CD4-positive, alpha-beta T cell (primary cell): ENCODE measurements at regions of chr19 and their contacts with region 1.

Region 1: GRCh38 chr19:33373701-33374421 is at the start of gene CEBPG:
- DNase-seq: peak in 11 of 14 experiments; percentile 18 to 88 (median 58)
- ATAC-seq: peak; percentile 27
- H3K4me3 ChIP-seq: peak within 1 kb of the TSS; percentile 97
- H3K4me3 Mint-ChIP-seq: peak within 1 kb of the TSS; percentile 93
- H3K27ac ChIP-seq: peak within 1 kb of the TSS; percentile 86 to 91
- H3K27ac Mint-ChIP-seq: peak within 1 kb of the TSS; percentile 89
- H3K4me1 ChIP-seq: peaks cover 40% of the 10 kb centered on the region
- H3K4me1 Mint-ChIP-seq: peaks cover 51% of the 10 kb centered on the region
- H3K27me3 ChIP-seq: no peaks in the 10 kb centered on the region
- H3K27me3 Mint-ChIP-seq: no peaks in the 10 kb centered on the region
- CTCF ChIP-seq: peak; percentile 32
- total RNA-seq, gene CEBPG: 15.5 TPM

Region 2: DNA sequence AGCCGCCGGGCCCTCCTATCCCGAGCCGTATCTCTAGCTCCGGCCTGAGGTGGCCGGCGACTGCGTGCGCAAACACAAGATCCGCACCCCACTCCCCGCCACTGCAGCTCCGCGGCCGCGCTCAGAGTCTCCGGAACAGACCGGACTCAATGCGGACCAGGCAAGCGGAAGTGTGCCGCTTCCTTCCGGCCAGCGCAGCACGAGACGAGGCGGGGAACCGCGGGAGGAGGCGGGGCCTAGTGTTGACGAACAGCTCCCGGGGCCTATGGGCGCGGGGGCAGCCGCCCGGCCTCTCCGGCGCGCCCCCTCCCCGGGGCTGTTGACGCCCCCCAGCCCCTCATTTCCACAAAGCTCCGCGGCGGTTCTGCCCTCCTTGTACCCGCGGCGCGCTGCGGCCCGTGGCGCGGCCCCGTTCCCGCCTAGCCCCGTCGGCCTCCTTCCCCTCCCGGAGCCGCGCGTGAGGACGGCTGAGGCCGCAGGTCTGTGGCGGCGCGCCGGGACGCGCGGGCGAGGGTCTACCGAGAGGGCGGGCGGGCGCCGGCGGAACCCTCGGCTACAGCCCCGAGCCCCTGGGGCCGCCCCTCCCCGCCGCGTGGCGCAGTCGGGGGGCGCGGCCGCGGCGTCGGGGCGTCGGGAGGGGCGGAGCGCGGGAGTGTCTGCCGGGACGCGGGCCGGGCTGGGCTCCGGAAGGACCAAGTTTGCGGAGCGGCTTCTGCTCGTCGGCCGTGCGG is 968.3 kb before region 1 on chr19 and contains the start of gene DPY19L3:
- CTCF ChIA-PET with region 1: no interaction called
- POLR2A ChIA-PET with region 1: interaction called, 3 read pairs
- intact Hi-C with region 1: loop called in 1 of 2 experiments (anchors 10 kb)
- DNase-seq: peak; percentile 77 to 93 (median 85)
- ATAC-seq: peak; percentile 88
- H3K4me3 ChIP-seq: peak within 1 kb of the TSS; percentile 76
- H3K4me3 Mint-ChIP-seq: peak within 1 kb of the TSS; percentile 89
- H3K27ac ChIP-seq: peak within 1 kb of the TSS; percentile 72 to 80
- H3K27ac Mint-ChIP-seq: peak within 1 kb of the TSS; percentile 91
- H3K4me1 ChIP-seq: peaks cover 19% of the 10 kb centered on the region
- H3K4me1 Mint-ChIP-seq: peaks cover 30% of the 10 kb centered on the region
- H3K27me3 ChIP-seq: no peaks in the 10 kb centered on the region
- H3K27me3 Mint-ChIP-seq: no peaks in the 10 kb centered on the region
- CTCF ChIP-seq: no peak
- total RNA-seq, gene DPY19L3: 7.3 to 8.5 TPM

Region 3: GRCh38 chr19:33302175-33302973 is 71.5 kb before region 1 on chr19 and contains the start of gene CEBPA:
- CTCF ChIA-PET with region 1: interaction called, 3 read pairs
- POLR2A ChIA-PET with region 1: interaction called, 7 read pairs
- intact Hi-C with region 1: loop called in 1 of 2 experiments (anchors 5 kb)
- DNase-seq: peak in 13 of 14 experiments; percentile 11 to 86 (median 42)
- ATAC-seq: peak; percentile 85
- H3K4me3 ChIP-seq: peak within 1 kb of the TSS; percentile 49
- H3K4me3 Mint-ChIP-seq: peak within 1 kb of the TSS; percentile 54
- H3K27ac ChIP-seq: no peak within 1 kb of the TSS
- H3K27ac Mint-ChIP-seq: no peak within 1 kb of the TSS
- H3K4me1 ChIP-seq: peaks cover 29% of the 10 kb centered on the region
- H3K4me1 Mint-ChIP-seq: no peaks in the 10 kb centered on the region
- H3K27me3 ChIP-seq: peaks cover 27 to 34% of the 10 kb centered on the region in 2 experiments
- H3K27me3 Mint-ChIP-seq: peaks cover 41% of the 10 kb centered on the region
- CTCF ChIP-seq: no peak
- total RNA-seq, gene CEBPA: 0.84 to 1.4 TPM

Region 4: DNA sequence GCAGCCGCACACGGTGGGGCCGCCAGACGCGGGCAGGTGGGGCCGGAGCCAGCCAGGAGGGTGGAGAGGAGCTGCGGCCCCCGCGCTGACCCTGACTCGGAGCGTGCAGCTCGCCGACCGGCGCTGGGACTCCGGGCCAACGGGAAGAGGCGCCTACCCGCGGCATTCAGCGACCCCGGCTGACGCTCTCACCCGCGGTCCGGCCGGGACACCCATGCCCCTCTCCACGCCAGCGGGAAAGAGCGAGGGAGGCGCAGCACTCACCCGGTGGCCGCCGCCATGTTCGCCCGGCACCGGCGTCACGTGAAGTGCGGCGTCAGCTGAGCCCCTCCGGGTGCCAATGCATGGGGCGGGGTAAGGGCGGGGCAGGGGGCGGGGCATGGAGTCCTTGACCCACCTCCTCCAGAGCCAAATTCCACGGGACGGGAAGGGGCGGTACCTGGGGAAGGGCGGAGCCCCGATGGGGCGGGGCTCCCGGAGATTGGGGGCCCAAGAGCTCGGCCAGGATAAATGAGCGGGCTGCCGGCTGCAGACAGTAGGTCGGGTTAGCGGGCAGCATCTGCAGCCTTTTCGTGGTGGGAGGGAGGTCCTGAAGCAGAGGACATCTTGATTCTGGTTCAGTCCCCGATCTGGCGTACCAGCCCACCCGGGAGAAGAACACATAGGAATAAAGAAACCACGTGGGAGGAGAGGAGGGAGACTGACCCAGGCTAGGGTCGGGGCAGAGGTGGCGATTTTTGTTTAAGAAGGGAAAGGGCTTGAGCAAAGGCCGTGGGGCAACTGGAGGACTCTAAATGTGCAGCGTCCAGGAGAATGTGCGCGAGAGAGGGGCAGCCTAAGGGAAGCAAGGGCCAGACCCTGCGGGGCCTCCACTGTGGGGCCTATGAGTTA is 147.9 kb after region 1 on chr19 and contains the start of gene PEPD:
- CTCF ChIA-PET with region 1: no interaction called
- POLR2A ChIA-PET with region 1: interaction called, 3 read pairs
- intact Hi-C with region 1: loop called in 1 of 2 experiments (anchors 5 kb)
- DNase-seq: peak; percentile 51 to 97 (median 77)
- ATAC-seq: peak; percentile 90
- H3K4me3 ChIP-seq: peak within 1 kb of the TSS; percentile 73
- H3K4me3 Mint-ChIP-seq: peak within 1 kb of the TSS; percentile 77
- H3K27ac ChIP-seq: no peak within 1 kb of the TSS
- H3K27ac Mint-ChIP-seq: peak within 1 kb of the TSS; percentile 34
- H3K4me1 ChIP-seq: peaks cover 25% of the 10 kb centered on the region
- H3K4me1 Mint-ChIP-seq: peaks cover 31% of the 10 kb centered on the region
- H3K27me3 ChIP-seq: no peaks in the 10 kb centered on the region
- H3K27me3 Mint-ChIP-seq: no peaks in the 10 kb centered on the region
- CTCF ChIP-seq: no peak
- total RNA-seq, gene PEPD: 17.5 to 23.0 TPM